ENCODE measurements at regions of chr11 and their contacts with region 1.

Region 1: DNA sequence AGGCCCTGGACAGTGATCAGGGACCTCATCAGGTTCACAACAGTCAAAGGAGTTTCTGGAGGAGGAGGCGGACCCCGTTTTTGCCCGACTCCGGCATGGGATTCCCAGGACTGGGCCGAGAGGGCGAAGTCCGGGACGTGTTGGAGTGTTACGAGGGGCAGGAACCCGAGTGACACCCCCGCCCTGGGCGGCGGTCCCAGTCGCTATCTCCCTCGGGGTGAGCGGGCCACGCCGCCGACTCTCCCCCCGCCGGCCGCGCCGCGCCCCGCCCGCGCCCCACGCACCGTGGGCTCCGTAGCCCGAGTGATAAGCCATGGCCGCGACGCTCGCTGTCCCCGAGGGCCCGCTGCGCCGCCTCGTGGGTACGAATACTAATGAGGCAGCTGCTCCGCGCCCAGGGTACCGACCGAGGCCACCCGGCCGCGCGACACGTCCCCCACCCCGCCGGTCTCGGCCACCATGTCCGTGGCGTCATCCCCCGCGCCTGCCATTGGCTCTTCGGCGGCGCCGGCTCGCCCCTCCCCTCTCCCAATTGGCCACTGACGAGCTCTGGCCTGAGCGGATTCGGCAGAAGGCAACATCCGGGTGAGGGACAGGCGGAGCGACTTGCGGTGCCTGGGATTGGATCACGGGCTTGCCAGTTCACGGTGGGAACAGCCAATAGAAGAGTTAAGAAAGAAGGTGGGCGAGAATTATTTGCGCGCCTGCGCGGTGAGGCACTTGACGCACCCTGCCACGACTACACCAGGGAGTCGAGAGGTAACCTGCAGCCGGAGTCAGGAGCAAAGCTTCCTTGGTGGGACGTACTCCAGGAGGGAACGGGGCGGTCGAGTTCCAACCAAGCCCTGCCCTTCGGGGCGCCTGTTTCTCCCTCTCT is at the start of gene YIF1A:
- DNase-seq: peak; percentile 98
- H3K4me3 ChIP-seq: peak within 1 kb of the TSS; percentile 84
- H3K27me3 ChIP-seq: peaks cover 19% of the 10 kb centered on the region
- CTCF ChIP-seq: no peak
- polyA plus RNA-seq, gene YIF1A: 151 and 228 TPM in 2 replicates

Region 2: GRCh38 chr11:65873318-65874156 is 415.4 kb before region 1 on chr11:
- CTCF ChIA-PET with region 1: no interaction called
- POLR2A ChIA-PET with region 1: no interaction called
- DNase-seq: no peak
- H3K4me3 ChIP-seq: peak overlapping the region; percentile 57
- H3K27me3 ChIP-seq: no peaks in the 10 kb centered on the region
- CTCF ChIP-seq: no peak

Region 3: DNA sequence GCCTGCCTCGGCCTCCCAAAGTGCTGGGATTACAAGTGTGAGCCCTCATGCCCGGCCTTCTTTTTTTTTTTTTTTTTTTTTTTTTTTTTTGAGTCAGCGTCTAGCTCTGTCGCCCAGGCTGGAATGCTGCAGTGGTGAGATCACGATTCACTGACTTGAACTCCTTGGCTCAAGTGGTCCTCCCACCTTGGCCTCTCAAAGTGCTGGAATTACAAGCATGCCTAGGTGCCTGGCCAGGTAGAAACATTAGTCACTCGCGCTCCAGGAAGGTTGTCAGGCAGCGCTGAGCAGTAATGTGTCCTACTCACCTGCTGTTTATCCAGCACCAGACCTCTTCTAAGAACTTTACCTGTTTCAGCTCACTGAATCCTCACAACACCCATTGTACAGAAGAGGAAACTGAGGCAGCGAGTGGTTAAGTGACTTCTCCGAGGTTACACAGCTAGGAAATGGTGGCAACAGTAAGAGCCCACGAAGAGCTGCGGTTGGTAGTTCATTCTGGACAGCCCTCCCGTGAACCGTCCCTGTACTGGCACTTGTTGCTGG is 277.6 kb before region 1 on chr11:
- CTCF ChIA-PET with region 1: no interaction called
- POLR2A ChIA-PET with region 1: interaction called, 12 read pairs
- DNase-seq: no peak
- H3K4me3 ChIP-seq: no peak overlapping the region
- H3K27me3 ChIP-seq: no peaks in the 10 kb centered on the region
- CTCF ChIP-seq: no peak

Region 4: DNA sequence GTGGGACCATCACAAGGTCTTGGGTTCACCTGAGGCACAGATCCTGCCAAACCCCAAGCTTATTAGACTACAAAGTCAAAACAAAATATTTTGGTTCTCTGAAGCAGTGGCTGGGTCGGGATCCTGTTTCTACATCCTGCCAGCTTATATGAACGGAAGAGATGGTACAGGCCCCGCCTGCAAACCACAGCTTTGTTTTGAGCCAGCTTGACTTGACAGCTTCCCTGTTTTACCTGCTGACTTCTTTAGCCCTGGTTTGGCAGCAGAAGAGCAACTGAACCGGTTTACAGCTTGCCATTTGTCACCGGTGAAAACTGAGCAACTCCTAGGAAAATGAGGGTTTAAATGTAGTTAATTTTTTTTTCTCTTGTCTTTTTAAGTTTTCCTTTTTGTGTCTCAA is 207.4 kb before region 1 on chr11:
- CTCF ChIA-PET with region 1: no interaction called
- POLR2A ChIA-PET with region 1: no interaction called
- DNase-seq: no peak
- H3K4me3 ChIP-seq: no peak overlapping the region
- H3K27me3 ChIP-seq: no peaks in the 10 kb centered on the region
- CTCF ChIP-seq: no peak

Region 5: GRCh38 chr11:66556086-66556485 is 267.2 kb after region 1 on chr11:
- CTCF ChIA-PET with region 1: no interaction called
- POLR2A ChIA-PET with region 1: no interaction called
- DNase-seq: no peak
- H3K4me3 ChIP-seq: no peak overlapping the region
- H3K27me3 ChIP-seq: peaks cover 7% of the 10 kb centered on the region
- CTCF ChIP-seq: no peak